ENCODE measurements at regions of chr19 and their contacts with region 1.

Region 1: GRCh38 chr19:19410275-19411192 is 5.1 kb downstream of the GATAD2A start:
- DNase-seq: no peak
- ATAC-seq: no peak
- H3K4me3 ChIP-seq: no peak overlapping the region
- H3K27ac ChIP-seq: no peak overlapping the region
- H3K4me1 ChIP-seq: peaks cover 9% of the 10 kb centered on the region
- H3K27me3 ChIP-seq: no peaks in the 10 kb centered on the region
- CTCF ChIP-seq: no peak
- POLR2A ChIP-seq: no peak
- RAD21 ChIP-seq: no peak

Region 2: DNA sequence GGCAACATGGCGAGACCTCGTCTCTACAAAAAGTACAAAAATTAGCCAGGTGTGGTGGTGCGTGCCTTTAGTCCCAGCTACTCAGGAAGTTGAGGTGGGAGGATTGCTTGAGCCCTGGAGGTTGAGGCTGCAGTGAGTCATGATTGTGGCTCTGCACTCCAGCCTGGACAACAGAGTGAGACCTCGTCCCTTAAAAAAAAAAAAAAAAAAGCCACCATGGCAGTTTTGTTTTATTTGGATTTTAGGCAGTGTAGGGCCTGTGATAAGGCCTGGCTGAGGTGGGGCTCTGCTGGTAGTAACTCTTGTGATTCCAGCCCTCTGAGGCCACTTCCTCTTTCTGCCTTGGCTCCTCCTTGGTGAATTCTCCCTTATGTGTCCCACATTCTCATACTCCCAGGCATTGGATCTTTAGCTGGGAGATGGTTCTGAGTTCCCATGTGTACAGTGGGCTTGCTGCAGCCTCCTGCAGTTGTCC is 34.2 kb after region 1 on chr19:
- CTCF ChIA-PET with region 1: no interaction called
- POLR2A ChIA-PET with region 1: no interaction called
- dilution Hi-C with region 1: no loop called
- in situ Hi-C with region 1: no loop called
- intact Hi-C with region 1: loop called (anchors 5 kb)
- DNase-seq: peak; percentile 36
- ATAC-seq: peak; percentile 77
- H3K4me3 ChIP-seq: no peak overlapping the region
- H3K27ac ChIP-seq: peak overlapping the region; percentile 2; the same call in 1 of the 2 replicates
- H3K4me1 ChIP-seq: peaks cover 9% of the 10 kb centered on the region
- H3K27me3 ChIP-seq: no peaks in the 10 kb centered on the region
- CTCF ChIP-seq: no peak
- POLR2A ChIP-seq: no peak
- RAD21 ChIP-seq: no peak

Region 3: GRCh38 chr19:19686580-19686979 is 276.0 kb after region 1 on chr19:
- CTCF ChIA-PET with region 1: no interaction called
- POLR2A ChIA-PET with region 1: no interaction called
- dilution Hi-C with region 1: no loop called
- in situ Hi-C with region 1: no loop called
- intact Hi-C with region 1: no loop called
- DNase-seq: no peak
- ATAC-seq: no peak
- H3K4me3 ChIP-seq: no peak overlapping the region
- H3K27ac ChIP-seq: no peak overlapping the region
- H3K4me1 ChIP-seq: no peaks in the 10 kb centered on the region
- H3K27me3 ChIP-seq: no peaks in the 10 kb centered on the region
- CTCF ChIP-seq: no peak
- POLR2A ChIP-seq: no peak
- RAD21 ChIP-seq: no peak

Measured in IMR-90 (cell line).